ENCODE measurements at regions of chr2 and their contacts with region 1.

Region 1: GRCh38 chr2:235551965-235552364 is 58.1 kb downstream of the AGAP1 start:
- DNase-seq: peak; percentile 22
- H3K4me3 ChIP-seq: no peak overlapping the region
- CTCF ChIP-seq: peak; percentile 69

Region 2: GRCh38 chr2:235149240-235149659 is 402.7 kb before region 1 on chr2:
- in situ Hi-C with region 1: loop called (anchors 10 kb)
- DNase-seq: peak; percentile 74
- H3K4me3 ChIP-seq: no peak overlapping the region
- CTCF ChIP-seq: no peak

Region 3: DNA sequence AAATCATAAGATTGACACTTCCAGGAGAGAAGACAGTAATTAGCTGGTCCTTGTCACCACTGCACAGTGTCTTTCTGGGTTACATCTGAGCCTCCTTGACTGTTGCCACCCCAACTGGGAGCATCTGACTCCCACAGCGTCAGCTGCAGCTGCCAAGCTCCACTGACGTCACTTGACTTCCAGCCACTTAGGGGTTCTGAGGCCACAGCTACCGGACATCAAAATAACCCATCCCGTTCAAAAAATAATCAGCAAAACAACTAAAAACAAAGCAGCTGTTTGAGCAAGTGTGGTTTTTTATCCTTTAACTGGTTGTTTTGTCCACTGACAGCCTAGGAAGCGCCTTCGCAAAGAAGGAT is 264.6 kb before region 1 on chr2:
- in situ Hi-C with region 1: loop called (anchors 10 kb)
- DNase-seq: no peak
- H3K4me3 ChIP-seq: no peak overlapping the region
- CTCF ChIP-seq: no peak

Region 4: GRCh38 chr2:235647877-235648276 is 95.9 kb after region 1 on chr2:
- in situ Hi-C with region 1: loop called (anchors 5 kb)
- DNase-seq: no peak
- H3K4me3 ChIP-seq: no peak overlapping the region
- CTCF ChIP-seq: no peak

Region 5: DNA sequence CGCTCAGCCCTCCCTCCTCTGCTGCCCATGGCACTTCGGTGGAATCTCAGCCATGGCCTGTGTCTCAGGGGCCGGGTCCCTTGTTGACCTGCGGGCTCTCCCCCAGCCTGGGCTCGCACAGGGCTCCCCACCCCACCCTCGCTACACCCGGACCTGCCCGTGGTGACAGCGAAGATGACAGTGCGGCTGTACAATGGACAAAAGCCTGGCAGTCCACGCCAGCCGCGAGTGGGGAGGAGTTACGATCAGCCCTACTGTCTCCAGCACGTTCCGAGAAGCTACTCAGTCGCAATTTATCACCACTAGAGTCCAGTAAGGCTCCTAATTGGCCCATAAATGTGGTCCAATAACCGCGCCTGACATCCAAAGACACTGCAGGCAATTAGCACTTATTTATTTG is 584.6 kb after region 1 on chr2:
- in situ Hi-C with region 1: no loop called
- DNase-seq: no peak
- H3K4me3 ChIP-seq: no peak overlapping the region
- CTCF ChIP-seq: no peak

Measured in astrocyte of the cerebellum (primary cell).